ENCODE measurements at regions of chr21 and their contacts with region 1.

Region 1: DNA sequence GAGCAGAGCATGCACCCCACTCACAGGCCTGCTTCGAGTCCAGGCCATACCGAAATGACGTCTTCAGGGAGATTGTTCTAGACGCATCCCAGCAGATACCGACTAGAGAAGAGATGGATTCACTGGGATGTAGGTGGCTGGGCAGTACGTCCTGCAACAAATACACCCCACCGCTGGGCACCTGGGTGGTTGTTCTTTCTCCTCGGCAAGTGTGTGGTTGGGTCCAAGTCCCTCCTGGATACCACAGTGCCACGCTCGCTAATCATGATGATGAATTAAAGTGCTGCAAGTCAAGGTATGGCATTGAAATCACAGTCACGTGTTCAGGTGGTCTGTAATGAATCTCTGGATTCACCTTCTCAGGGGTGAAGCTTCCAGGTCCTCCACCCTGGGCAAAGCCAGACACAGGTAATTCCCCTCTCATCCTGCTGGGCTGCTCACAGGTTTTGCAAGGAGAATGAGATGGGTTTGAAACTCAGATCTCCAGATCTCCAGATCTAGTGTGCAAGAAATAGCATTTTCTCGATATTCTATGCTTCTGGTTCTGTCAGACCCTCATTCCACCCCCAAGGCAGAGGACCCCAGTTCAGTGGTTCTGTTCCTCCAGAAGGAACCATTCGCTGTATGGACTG is 45.7 kb downstream of the UBASH3A start:
- DNase-seq: no peak
- ATAC-seq: no peak
- H3K4me3 Mint-ChIP-seq: no peak overlapping the region
- H3K27ac Mint-ChIP-seq: peak overlapping the region; percentile 86
- H3K4me1 Mint-ChIP-seq: peaks cover 52% of the 10 kb centered on the region
- H3K27me3 Mint-ChIP-seq: no peaks in the 10 kb centered on the region

Region 2: GRCh38 chr21:42289926-42290325 is 159.5 kb before region 1 on chr21:
- CTCF ChIA-PET with region 1: no interaction called
- POLR2A ChIA-PET with region 1: no interaction called
- intact Hi-C with region 1: no loop called
- DNase-seq: no peak
- ATAC-seq: no peak
- H3K4me3 Mint-ChIP-seq: no peak overlapping the region
- H3K27ac Mint-ChIP-seq: no peak overlapping the region
- H3K4me1 Mint-ChIP-seq: no peaks in the 10 kb centered on the region
- H3K27me3 Mint-ChIP-seq: no peaks in the 10 kb centered on the region

Region 3: GRCh38 chr21:42309753-42310221 is 139.6 kb before region 1 on chr21:
- CTCF ChIA-PET with region 1: interaction called, 21 read pairs
- POLR2A ChIA-PET with region 1: no interaction called
- intact Hi-C with region 1: loop called (anchors 1 kb)
- DNase-seq: peak; percentile 88
- ATAC-seq: peak; percentile 89
- H3K4me3 Mint-ChIP-seq: no peak overlapping the region
- H3K27ac Mint-ChIP-seq: no peak overlapping the region
- H3K4me1 Mint-ChIP-seq: no peaks in the 10 kb centered on the region
- H3K27me3 Mint-ChIP-seq: peaks cover 2% of the 10 kb centered on the region

Region 4: GRCh38 chr21:42374864-42375492 is 74.4 kb before region 1 on chr21:
- CTCF ChIA-PET with region 1: interaction called, 3 read pairs
- POLR2A ChIA-PET with region 1: no interaction called
- intact Hi-C with region 1: loop called in 1 of 2 experiments (anchors 2 kb)
- DNase-seq: peak; percentile 47
- ATAC-seq: peak; percentile 31
- H3K4me3 Mint-ChIP-seq: peak overlapping the region; percentile 57
- H3K27ac Mint-ChIP-seq: peak overlapping the region; percentile 92
- H3K4me1 Mint-ChIP-seq: peaks cover 50% of the 10 kb centered on the region
- H3K27me3 Mint-ChIP-seq: no peaks in the 10 kb centered on the region

Region 5: GRCh38 chr21:42474982-42475381 is 25.6 kb after region 1 on chr21:
- CTCF ChIA-PET with region 1: no interaction called
- POLR2A ChIA-PET with region 1: no interaction called
- intact Hi-C with region 1: no loop called
- DNase-seq: no peak
- ATAC-seq: no peak
- H3K4me3 Mint-ChIP-seq: no peak overlapping the region
- H3K27ac Mint-ChIP-seq: no peak overlapping the region
- H3K4me1 Mint-ChIP-seq: peaks cover 10% of the 10 kb centered on the region
- H3K27me3 Mint-ChIP-seq: peaks cover 3% of the 10 kb centered on the region